CD4-positive, alpha-beta memory T cell (primary cell): ENCODE measurements at regions of chr20 and their contacts with region 1.

Region 1: GRCh38 chr20:43749734-43750294 is 23.0 kb upstream of the GTSF1L start:
- DNase-seq: peak; percentile 59 to 78 (median 62)
- H3K4me3 ChIP-seq: no peak overlapping the region
- H3K4me3 Mint-ChIP-seq: peak overlapping the region in 1 of 8 donors; percentile 37
- H3K27ac ChIP-seq: no peak overlapping the region
- H3K27ac Mint-ChIP-seq: peak overlapping the region in 2 of 7 donors; percentile 62 to 66
- H3K4me1 ChIP-seq: peaks cover 30% of the 10 kb centered on the region
- H3K4me1 Mint-ChIP-seq: peaks cover 19 to 31% (median 21%) of the 10 kb centered on the region in 4 donors
- H3K27me3 ChIP-seq: no peaks in the 10 kb centered on the region
- H3K27me3 Mint-ChIP-seq: peaks cover 3 to 22% of the 10 kb centered on the region in 2 donors

Region 2: DNA sequence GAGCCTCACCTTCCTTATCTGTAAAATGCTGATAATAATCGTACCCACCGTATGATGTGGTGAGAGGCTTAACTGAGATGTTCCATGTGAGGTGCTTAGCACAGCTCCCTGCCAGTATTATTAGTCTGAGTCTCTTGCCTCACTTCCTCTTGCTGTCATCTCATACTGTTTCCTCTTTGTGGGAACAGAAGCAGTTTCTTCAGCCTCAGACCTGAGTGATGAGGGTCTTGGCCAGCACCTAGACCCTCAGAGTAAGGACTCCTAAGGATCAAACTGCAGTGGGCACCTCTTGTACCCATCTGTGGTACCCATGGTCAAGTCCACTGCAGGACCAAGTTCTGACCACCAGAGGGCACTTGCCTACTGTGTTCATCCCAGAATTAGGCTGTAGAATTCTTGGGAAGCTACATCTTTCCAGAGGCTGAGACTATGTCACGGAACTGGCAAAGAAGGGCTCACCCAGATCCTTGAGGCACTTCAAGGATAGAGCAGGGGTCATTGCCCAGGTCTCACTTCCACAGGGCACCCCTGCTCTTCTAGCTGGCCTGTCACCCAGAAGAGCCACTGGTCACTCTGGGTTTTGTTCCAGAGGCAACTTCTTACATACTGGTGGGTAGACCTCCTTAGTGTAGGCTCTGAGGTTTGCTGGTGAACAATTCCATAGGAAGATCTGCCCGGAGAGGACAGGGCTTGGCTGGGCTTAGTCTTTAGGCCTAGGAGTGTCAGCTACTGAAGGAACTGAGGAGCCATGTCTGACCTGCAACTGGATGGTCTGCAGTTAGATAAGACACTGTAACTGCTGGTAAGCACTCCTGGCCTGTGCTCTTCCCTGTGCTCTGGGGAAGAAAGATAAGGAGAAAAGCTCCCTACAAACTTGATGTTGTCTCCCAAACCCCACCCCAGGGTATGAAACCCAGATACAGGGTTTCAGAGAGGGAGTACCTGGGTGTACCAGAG is 211.6 kb before region 1 on chr20:
- CTCF ChIA-PET with region 1: no interaction called
- POLR2A ChIA-PET with region 1: no interaction called
- intact Hi-C with region 1: no loop called
- DNase-seq: peak in 4 of 5 donors; percentile 15 to 25 (median 21)
- H3K4me3 ChIP-seq: no peak overlapping the region
- H3K4me3 Mint-ChIP-seq: no peak overlapping the region
- H3K27ac ChIP-seq: no peak overlapping the region
- H3K27ac Mint-ChIP-seq: peak overlapping the region in 2 of 7 donors; percentile 3 to 4
- H3K4me1 ChIP-seq: no peaks in the 10 kb centered on the region
- H3K4me1 Mint-ChIP-seq: peaks cover 0 to 2% (median 0%) of the 10 kb centered on the region in 4 donors
- H3K27me3 ChIP-seq: no peaks in the 10 kb centered on the region
- H3K27me3 Mint-ChIP-seq: no peaks in the 10 kb centered on the region

Region 3: DNA sequence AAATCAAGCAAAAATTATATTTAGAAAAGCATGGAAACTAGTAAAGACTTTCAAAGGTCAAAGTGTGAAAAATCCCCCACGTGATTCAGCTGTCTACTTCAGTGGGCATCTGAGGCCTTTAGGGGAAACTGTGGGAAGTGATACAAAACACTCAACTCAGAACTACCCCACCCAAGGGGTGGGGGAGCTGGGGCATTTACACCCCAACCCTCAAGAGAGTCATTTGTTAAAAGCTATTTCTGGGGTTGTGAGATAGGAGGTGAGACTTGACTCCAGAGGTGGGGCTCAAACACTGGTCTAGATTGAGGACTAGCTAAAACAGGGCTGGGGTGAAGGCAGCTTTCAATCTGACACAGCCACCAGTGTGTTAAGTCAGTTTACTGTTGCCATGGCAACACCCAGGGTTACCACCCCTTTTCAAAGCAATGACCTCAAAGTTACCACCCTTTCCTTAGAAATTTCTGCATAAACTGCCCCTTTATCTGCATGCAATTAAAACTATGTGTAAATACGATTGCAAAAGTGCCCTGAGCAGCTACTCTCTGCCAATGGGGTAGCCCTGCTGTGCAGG is 13.1 kb before region 1 on chr20:
- CTCF ChIA-PET with region 1: interaction called, 12 read pairs
- POLR2A ChIA-PET with region 1: no interaction called
- intact Hi-C with region 1: no loop called
- DNase-seq: no peak
- H3K4me3 ChIP-seq: no peak overlapping the region
- H3K4me3 Mint-ChIP-seq: no peak overlapping the region
- H3K27ac ChIP-seq: no peak overlapping the region
- H3K27ac Mint-ChIP-seq: no peak overlapping the region
- H3K4me1 ChIP-seq: no peaks in the 10 kb centered on the region
- H3K4me1 Mint-ChIP-seq: peaks cover 2 to 13% (median 8%) of the 10 kb centered on the region in 4 donors
- H3K27me3 ChIP-seq: no peaks in the 10 kb centered on the region
- H3K27me3 Mint-ChIP-seq: peaks cover 1% of the 10 kb centered on the region in 2 donors

Region 4: DNA sequence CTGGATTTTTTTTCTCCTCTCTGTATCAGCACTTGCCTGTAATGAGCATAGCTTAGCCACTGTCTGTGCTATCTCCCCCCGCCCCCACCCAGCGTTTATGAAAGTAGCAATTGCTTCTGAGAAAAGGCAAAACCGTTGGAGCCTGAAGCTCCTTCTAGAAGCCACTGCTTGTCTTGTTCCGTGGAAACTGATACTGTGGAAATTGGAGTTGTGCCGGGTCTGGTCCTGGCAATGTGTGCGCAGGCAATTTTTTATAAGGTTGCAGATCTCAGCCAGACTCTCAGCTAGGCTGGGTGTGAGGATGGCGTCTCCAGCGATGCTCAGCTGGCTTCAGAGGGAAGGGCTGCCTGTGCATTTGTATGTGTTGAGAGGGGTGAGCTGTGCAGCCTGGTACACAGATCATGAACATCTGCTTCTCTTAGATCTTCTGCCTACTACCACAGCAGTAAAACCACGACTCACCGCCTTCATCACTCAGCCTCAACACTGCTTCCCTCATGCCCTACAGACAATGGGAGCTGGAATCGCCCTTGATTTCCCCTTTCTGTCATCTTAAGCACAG is 49.4 kb after region 1 on chr20:
- CTCF ChIA-PET with region 1: no interaction called
- POLR2A ChIA-PET with region 1: no interaction called
- intact Hi-C with region 1: no loop called
- DNase-seq: no peak
- H3K4me3 ChIP-seq: no peak overlapping the region
- H3K4me3 Mint-ChIP-seq: peak overlapping the region in 2 of 8 donors; percentile 6 to 33
- H3K27ac ChIP-seq: no peak overlapping the region
- H3K27ac Mint-ChIP-seq: peak overlapping the region in 1 of 7 donors; percentile 37
- H3K4me1 ChIP-seq: peaks cover 8% of the 10 kb centered on the region
- H3K4me1 Mint-ChIP-seq: peaks cover 3 to 15% (median 8%) of the 10 kb centered on the region in 4 donors
- H3K27me3 ChIP-seq: no peaks in the 10 kb centered on the region
- H3K27me3 Mint-ChIP-seq: peaks cover 0 to 7% of the 10 kb centered on the region in 2 donors

Region 5: DNA sequence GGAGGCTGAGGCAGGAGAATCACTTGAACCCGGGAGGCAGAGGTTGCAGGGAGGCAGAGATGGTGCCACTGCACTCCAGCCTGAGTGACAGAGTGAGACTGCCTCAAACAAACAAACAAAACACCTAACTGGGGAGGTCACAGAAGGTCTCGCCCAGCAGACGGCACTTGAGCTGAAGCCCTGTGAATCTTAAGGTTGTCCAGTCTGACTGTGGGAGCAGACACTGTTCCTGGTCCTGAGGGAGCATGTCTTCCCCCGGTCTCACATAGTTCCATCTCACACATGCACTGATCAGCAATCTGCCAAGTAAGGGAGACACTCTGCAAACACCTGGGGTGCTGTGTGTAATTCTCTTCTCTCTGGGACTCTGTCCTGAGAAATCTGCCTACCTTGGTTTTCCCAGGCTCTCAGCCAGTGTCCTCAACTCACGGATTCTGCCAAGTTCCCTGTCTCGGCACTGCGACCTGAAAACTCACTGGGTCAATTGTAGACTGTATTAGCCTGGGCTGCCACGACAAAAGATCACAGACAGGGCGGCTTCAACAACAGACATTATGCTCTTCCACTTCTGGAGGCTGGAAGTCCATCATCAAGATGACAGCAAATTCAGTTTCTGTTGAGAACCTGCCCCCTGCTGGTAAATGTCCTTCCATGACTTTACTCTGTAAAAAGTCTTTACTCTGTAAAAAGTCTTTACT is 342.9 kb after region 1 on chr20:
- CTCF ChIA-PET with region 1: interaction called, 12 read pairs
- POLR2A ChIA-PET with region 1: no interaction called
- intact Hi-C with region 1: no loop called
- DNase-seq: peak in 3 of 5 donors; percentile 17 to 27 (median 17)
- H3K4me3 ChIP-seq: no peak overlapping the region
- H3K4me3 Mint-ChIP-seq: no peak overlapping the region
- H3K27ac ChIP-seq: no peak overlapping the region
- H3K27ac Mint-ChIP-seq: peak overlapping the region in 1 of 7 donors; percentile 59
- H3K4me1 ChIP-seq: no peaks in the 10 kb centered on the region
- H3K4me1 Mint-ChIP-seq: no peaks in the 10 kb centered on the region
- H3K27me3 ChIP-seq: no peaks in the 10 kb centered on the region
- H3K27me3 Mint-ChIP-seq: peaks cover 17 to 20% of the 10 kb centered on the region in 2 donors

Region 6: DNA sequence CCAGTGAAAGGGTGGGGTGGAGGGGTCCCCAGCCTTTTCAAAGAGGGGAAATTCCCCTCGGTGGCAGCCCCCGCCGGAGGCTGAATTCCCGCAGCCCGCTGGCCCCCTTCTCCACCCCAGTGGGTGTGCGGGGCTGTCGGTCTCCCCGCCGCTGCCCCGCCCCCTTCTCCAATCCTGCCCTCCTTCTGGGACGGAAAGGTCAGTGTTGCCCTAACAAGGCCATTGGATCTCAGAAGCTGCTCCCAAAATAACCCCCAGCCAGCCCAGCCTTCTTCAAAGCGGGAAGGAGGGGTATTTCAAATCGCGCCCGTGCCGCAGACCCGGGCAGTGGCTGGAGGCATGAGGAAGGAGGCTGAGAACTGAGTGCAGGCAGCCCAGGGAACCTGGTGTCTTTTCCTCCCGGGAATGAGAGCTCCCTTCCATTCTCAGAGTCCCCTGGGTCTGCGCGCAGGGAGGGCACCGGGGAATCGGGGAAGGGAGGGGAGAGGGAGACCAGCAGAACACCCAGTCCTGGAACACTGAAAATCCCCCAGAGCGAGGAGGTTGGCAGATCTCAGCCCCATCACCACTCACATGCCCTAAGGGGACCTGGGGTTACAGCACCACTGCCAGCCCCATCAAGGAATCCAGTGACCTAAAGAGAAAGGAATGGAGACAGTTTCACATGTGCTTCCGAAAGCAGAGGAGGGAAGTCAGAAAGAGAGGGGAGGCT is 437.4 kb after region 1 on chr20 and contains the start of gene JPH2:
- CTCF ChIA-PET with region 1: interaction called, 11 read pairs
- POLR2A ChIA-PET with region 1: no interaction called
- intact Hi-C with region 1: loop called (anchors 2 kb)
- DNase-seq: no peak
- H3K4me3 ChIP-seq: no peak within 1 kb of the TSS
- H3K4me3 Mint-ChIP-seq: peak within 1 kb of the TSS in 3 of 8 donors; percentile 5 to 32 (median 15)
- H3K27ac ChIP-seq: no peak within 1 kb of the TSS
- H3K27ac Mint-ChIP-seq: no peak within 1 kb of the TSS
- H3K4me1 ChIP-seq: no peaks in the 10 kb centered on the region
- H3K4me1 Mint-ChIP-seq: peaks cover 1 to 11% (median 5%) of the 10 kb centered on the region in 4 donors
- H3K27me3 ChIP-seq: peaks cover 26% of the 10 kb centered on the region
- H3K27me3 Mint-ChIP-seq: peaks cover 41 to 51% of the 10 kb centered on the region in 2 donors
- total RNA-seq, gene JPH2: not detected